Activated T-helper 1 cell treated with anti-CD3 and anti-CD28 coated beads, Interleukin-12 subunit alpha, Interleukin-12 subunit beta, Interleukin-2, Interleukin-4 antibody, amounts not matched to agents 30 ng/mL and 10 ng/mL and 1 ng/mL, durations not matched to agents 14 hours and 24 hours and 36 hours (primary cell): ENCODE measurements at regions of chr17 and their contacts with region 1.

Region 1: GRCh38 chr17:50547035-50547735 is at the start of gene SPATA20:
- DNase-seq: peak; percentile 81
- H3K4me3 Mint-ChIP-seq: peak within 1 kb of the TSS; percentile 77
- H3K27ac Mint-ChIP-seq: peak within 1 kb of the TSS; percentile 79
- H3K4me1 Mint-ChIP-seq: peaks cover 16% of the 10 kb centered on the region
- H3K27me3 Mint-ChIP-seq: peaks cover 12% of the 10 kb centered on the region
- total RNA-seq, gene SPATA20: 20.5 and 22.5 TPM in 2 replicates

Region 2: GRCh38 chr17:50560185-50560824 is 13.1 kb after region 1 on chr17 and contains the start of gene CACNA1G:
- intact Hi-C with region 1: loop called (anchors 1 kb)
- DNase-seq: peak; percentile 87
- H3K4me3 Mint-ChIP-seq: peak within 1 kb of the TSS; percentile 70
- H3K27ac Mint-ChIP-seq: no peak within 1 kb of the TSS
- H3K4me1 Mint-ChIP-seq: peaks cover 11% of the 10 kb centered on the region
- H3K27me3 Mint-ChIP-seq: peaks cover 59% of the 10 kb centered on the region
- total RNA-seq, gene CACNA1G: 0.05 and 0.07 TPM in 2 replicates

Region 3: DNA sequence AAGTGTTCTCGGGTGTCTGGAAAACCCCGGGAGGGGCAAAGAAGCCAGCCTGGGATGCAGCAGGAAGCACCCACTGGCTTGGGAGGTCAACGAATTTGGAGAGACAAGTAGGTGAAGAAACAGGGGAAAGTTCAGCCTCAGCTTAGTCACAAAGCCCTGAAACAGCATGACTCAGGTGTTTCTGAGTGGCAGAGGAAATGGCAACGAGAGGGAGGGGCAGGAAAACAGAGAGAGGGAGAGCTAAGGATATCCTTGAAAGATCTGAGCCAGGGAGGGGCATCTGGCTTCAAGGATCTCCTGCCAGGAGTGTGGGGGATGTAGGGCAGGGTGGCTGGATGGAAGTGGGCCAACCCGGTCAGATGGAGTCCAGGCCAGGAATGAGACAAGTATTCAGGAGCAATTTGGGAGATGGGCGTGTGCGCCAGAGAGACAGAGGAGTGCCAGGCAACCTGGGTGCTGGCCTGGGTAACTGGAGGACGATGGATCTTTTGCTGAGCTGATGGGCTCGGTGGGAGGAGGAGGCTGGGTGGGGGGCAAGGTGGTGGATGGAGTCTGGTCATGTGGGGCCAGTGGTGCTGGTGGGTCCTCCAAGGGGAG is 114.7 kb after region 1 on chr17:
- intact Hi-C with region 1: no loop called
- DNase-seq: peak; percentile 23
- H3K4me3 Mint-ChIP-seq: no peak overlapping the region
- H3K27ac Mint-ChIP-seq: peak overlapping the region; percentile 70
- H3K4me1 Mint-ChIP-seq: peaks cover 27% of the 10 kb centered on the region
- H3K27me3 Mint-ChIP-seq: peaks cover 6% of the 10 kb centered on the region

Region 4: DNA sequence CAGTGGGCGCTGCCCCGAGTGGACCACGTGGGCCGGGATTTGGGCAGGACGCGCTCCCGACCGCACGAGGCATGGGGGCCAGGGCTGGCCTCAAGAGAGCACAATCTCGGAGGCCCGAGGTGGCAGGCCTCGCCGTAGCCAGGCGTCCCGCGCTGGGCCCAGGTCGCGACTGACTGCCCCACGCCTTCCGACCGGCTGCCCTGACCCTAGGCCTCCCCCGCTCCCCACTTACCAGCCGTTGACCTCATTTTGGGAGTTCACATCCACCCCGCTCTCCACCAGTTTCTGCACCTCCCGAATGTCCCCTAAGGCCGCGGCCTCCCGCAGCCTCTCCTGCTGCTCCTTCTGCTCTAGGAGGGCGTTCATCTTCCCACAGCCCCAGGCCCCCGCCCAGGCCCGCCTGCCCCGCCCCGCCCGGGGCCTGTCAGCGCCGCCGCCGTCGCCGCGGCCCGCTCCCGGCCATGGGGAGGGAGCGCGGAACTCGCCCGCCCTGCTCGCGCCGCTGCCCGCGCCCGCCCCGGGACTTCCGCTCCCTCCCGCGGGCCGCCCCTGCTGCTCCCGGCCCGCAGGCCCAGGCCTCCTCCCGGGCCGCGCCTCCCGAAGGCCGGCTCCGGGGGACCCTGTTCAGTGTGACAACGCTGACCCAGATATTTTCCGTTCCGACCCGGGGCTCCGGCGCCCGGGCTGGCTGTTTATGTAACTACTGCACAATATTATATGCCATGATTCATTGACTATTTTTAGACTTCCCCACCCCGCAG is 160.3 kb after region 1 on chr17 and contains the start of gene ANKRD40:
- intact Hi-C with region 1: loop called (anchors 1 kb)
- DNase-seq: peak; percentile 90
- H3K4me3 Mint-ChIP-seq: peak within 1 kb of the TSS; percentile 95
- H3K27ac Mint-ChIP-seq: peak within 1 kb of the TSS; percentile 97
- H3K4me1 Mint-ChIP-seq: peaks cover 40% of the 10 kb centered on the region
- H3K27me3 Mint-ChIP-seq: peaks cover 3% of the 10 kb centered on the region
- total RNA-seq, gene ANKRD40: 47.0 and 50.3 TPM in 2 replicates

Region 5: GRCh38 chr17:50783193-50783660 is 236.0 kb after region 1 on chr17:
- intact Hi-C with region 1: loop called (anchors 1 kb)
- DNase-seq: peak; percentile 68
- H3K4me3 Mint-ChIP-seq: no peak overlapping the region
- H3K27ac Mint-ChIP-seq: no peak overlapping the region
- H3K4me1 Mint-ChIP-seq: peaks cover 27% of the 10 kb centered on the region
- H3K27me3 Mint-ChIP-seq: peaks cover 32% of the 10 kb centered on the region

Region 6: DNA sequence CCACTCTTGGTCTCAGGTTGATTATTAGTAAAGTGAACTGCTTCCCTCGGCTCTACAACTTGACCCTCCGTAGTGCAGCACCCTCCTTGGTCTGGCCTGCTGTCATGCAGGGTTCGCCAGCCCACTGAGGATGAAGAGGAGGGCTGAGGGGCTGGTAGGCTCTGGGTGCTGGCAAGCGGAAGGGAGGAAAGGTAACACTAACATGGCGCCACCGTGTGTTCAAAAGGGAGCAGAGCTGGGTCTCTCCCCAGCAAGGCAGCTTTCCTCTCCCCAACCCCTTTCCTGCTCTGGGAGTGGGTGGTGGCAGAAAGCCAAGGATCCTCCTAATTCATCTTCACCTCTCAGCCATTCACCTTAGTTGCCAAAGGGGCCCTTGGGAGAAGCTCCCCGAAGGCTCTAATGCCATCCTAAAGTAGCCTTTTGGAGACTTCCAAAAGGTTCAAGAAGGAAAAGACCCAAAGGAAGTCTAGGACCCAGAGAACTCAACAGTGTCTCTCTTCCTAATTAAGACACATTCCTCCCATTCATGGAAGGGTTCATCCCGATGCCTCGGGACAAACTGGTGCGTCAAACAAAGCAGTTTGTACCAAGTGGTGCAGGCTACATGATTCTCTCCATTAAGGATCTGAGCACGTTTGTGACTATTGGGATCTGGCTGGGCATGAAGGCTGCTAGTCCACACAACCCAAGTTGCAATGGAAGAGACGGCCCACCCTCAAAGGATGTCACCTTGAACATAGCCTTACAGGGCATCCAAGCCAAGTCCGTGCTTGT is 409.8 kb after region 1 on chr17:
- intact Hi-C with region 1: loop called (anchors 2 kb)
- DNase-seq: peak; percentile 51
- H3K4me3 Mint-ChIP-seq: no peak overlapping the region
- H3K27ac Mint-ChIP-seq: peak overlapping the region; percentile 48
- H3K4me1 Mint-ChIP-seq: peaks cover 5% of the 10 kb centered on the region
- H3K27me3 Mint-ChIP-seq: no peaks in the 10 kb centered on the region